Esophagus squamous epithelium (tissue), 5 donors: ENCODE measurements at regions of chr19 and their contacts with region 1.

Region 1: DNA sequence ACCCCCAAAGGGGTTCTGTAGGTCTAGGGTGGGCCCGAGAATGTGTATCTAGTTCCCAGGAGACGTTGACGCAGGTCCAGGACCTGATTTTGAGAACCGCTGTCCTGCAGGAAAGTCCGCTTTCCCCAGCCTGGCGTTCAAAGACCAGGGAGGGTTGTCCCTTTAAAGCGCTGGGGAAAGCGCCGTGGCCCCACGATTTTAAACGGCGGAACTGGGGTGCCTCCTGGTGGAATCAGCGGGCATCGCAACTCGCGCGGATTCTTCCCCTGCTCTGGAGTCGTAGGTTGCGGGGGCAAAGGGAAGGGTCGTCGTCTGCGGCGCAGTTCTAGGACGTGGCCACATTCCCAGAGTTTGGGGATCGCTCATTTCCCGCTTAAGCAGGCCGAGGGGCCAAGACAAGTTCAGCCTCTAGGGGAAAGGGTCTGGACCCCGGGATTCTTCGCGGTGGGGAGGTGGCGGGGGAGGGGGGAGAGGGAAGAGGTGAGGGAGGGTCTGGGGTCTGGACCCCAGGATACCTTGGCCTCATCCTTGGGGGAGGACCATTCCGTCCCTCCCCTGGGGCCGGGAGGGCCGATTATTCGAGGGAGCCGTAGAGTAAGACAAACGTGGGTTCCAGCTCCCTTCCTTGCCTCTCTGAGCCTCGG is 7.7 kb downstream of the PNMA8B start:
- DNase-seq: no peak
- H3K4me3 ChIP-seq: peak overlapping the region in 3 of 4 donors; percentile 20 to 53 (median 22)
- H3K27ac ChIP-seq: no peak overlapping the region
- H3K4me1 ChIP-seq: peaks cover 14 to 42% (median 19%) of the 10 kb centered on the region in 3 donors
- H3K27me3 ChIP-seq: peaks cover 5 to 96% (median 13%) of the 10 kb centered on the region in 4 donors
- CTCF ChIP-seq: peak; percentile 74 to 97 (median 94)
- POLR2A ChIP-seq: no peak

Region 2: DNA sequence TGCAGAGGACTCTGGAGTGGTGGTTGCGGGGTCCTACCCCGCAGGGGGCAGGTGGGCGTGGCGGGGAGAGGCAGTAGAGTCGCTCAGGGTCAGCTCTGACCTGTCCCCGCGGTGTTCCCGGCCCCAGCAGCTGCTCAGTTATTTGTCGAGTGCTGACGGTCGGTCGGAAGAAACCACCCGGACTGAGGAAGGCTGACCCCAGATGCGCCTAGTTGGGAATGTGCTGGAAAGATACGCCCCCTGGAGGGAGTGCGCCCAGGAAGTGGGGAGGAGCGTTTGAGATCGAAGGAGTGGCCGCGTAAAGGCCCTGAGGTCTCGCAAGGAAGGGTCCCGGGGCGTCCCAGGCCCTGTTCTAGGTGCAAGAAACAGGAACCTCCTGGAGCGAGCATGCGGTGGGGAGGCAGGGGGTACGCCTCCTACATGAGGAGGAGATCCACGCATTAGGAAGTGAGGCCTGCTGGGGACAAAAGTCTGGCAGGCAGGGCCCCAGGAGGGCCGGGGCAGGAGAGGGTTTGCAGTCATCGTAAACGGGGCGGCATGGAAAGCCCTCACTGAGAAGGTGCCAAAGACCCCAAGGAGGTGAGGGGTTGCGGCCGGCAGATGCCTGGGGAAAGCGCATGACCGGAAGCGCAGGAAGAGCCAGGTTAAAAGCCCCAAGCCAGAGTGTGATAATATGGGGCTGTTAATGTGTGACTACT is 83.7 kb before region 1 on chr19:
- intact Hi-C with region 1: loop called (anchors 5 kb)
- DNase-seq: no peak
- H3K4me3 ChIP-seq: peak overlapping the region in 3 of 4 donors; percentile 23 to 42 (median 39)
- H3K27ac ChIP-seq: peak overlapping the region in 3 of 4 donors; percentile 10 to 52 (median 50)
- H3K4me1 ChIP-seq: peaks cover 3 to 43% (median 7%) of the 10 kb centered on the region in 3 donors
- H3K27me3 ChIP-seq: peaks cover 0 to 99% (median 4%) of the 10 kb centered on the region in 4 donors
- CTCF ChIP-seq: peak in 1 of 6 experiments; percentile 11
- POLR2A ChIP-seq: no peak